Right cardiac atrium (tissue), 5 donors: ENCODE measurements at regions of chr1 and their contacts with region 1.

Region 1: DNA sequence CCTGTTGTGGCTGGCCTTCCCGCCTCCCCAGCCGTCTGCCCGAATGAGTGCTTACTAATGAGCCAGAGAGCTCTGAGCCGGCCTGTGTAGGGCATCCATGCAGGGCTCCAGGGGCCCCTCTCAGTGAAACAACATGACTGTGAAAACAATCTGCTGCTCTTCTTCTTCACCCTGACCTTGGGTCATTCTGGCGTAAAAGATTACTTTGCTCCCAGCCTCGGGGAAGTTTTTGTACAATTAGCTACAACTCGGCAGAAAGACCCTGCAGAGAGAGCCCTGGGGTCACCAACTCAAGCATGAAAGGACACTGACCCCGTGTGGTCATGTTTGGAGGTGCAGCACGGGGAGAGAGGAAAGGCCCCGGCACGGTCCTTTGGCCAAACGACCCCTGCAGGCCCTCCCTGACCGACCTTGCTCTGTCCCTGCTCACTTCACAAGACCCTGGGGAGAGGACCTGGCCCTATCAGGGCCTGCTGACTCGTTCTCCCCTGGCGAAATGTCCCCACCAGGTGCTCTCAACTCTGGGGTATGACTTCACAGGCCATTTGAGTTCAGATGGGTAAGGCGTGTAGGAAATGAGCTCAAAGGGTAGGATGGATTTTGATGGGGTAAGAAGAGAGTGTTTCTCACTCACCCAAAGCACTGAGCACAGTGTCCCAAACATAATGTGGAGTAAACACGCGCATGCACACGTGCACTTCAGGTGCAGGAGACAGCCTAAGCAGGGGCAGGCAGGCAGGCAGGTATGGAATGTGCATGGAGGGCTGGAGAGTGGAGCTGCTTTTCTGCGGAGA is 22.9 kb upstream of the FAM20B start:
- DNase-seq: peak; percentile 72 to 94 (median 87)
- ATAC-seq: peak; percentile 84 to 88
- H3K4me3 ChIP-seq: no peak overlapping the region
- H3K27ac ChIP-seq: no peak overlapping the region
- H3K4me1 ChIP-seq: no peaks in the 10 kb centered on the region
- H3K27me3 ChIP-seq: no peaks in the 10 kb centered on the region

Region 2: GRCh38 chr1:178532392-178532791 is 470.4 kb before region 1 on chr1:
- intact Hi-C with region 1: loop called in 1 of 4 experiments (anchors 5 kb)
- DNase-seq: peak; percentile 80 to 93 (median 93)
- ATAC-seq: peak; percentile 65 to 67
- H3K4me3 ChIP-seq: no peak overlapping the region
- H3K27ac ChIP-seq: no peak overlapping the region
- H3K4me1 ChIP-seq: peaks cover 9% of the 10 kb centered on the region
- H3K27me3 ChIP-seq: no peaks in the 10 kb centered on the region

Region 3: DNA sequence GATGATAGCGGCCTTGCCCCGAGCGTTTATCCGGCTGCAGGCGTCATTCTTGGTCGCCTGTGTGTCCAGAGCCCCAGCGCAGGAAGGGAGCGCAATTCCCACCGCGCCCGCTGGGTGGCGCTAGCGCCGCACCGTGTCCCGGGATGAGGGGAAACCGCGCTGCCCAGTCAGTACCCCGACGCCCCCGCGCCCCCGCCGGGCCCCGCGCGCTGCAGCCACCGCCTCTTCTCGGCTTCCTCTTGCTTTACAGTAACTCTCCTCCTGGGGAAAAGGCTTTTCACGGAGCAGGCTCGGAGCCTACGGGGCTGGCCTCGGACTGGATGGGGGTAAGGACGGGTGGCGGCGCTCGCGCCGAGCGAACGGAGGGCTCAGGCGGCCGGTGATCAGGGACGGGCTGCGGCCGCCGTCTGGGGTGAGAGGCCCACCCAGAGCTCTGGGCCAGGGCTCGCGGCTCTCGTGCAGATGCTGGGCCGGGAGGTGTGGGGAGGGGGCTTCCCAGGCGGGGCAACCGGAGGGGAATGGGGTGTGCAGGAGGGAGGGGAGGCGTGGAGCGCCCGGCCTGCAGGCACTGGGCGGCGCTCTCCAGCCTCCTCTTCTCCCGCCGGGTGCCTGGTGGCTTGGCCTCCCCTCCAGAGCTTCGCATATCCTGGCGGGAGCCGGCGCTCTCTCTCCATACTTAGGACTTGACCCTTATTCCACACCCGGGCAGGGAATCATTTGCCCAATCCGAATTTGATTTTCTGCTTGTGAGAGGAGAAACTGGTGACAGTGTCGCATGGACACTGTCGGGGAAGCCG is 460.0 kb before region 1 on chr1:
- intact Hi-C with region 1: loop called in 2 of 4 experiments (anchors 5 kb)
- DNase-seq: peak; percentile 85 to 96 (median 95)
- ATAC-seq: peak; percentile 93 to 94
- H3K4me3 ChIP-seq: peak overlapping the region; percentile 77
- H3K27ac ChIP-seq: peak overlapping the region; percentile 73
- H3K4me1 ChIP-seq: peaks cover 2% of the 10 kb centered on the region
- H3K27me3 ChIP-seq: no peaks in the 10 kb centered on the region

Region 4: DNA sequence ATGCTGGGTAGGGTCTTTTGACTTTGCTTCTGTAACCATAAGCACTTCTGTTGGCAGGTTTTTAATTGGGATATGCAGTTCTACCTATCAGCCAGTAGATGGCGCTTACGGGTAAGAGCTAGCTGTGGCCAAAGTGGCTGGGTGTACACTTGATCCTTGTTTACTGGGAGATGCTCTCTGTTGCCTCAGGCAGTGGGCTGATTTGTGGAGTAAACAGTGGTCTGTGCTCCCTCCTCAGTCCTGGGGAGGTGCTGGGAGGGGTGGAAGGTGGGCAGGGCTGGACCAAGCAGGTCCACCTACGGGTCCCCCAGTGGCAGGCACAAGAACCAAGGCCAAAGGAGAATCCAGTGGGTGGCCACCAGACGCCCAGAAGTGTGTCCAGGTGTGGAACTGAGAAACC is 234.3 kb before region 1 on chr1:
- intact Hi-C with region 1: loop called in 3 of 4 experiments (anchors 2 to 10 kb)
- DNase-seq: no peak
- ATAC-seq: peak in 1 of 2 donors; percentile 38
- H3K4me3 ChIP-seq: no peak overlapping the region
- H3K27ac ChIP-seq: no peak overlapping the region
- H3K4me1 ChIP-seq: no peaks in the 10 kb centered on the region
- H3K27me3 ChIP-seq: no peaks in the 10 kb centered on the region

Region 5: GRCh38 chr1:178774263-178774662 is 228.5 kb before region 1 on chr1:
- intact Hi-C with region 1: loop called in 3 of 4 experiments (anchors 2 to 10 kb)
- DNase-seq: no peak
- ATAC-seq: no peak
- H3K4me3 ChIP-seq: no peak overlapping the region
- H3K27ac ChIP-seq: no peak overlapping the region
- H3K4me1 ChIP-seq: no peaks in the 10 kb centered on the region
- H3K27me3 ChIP-seq: no peaks in the 10 kb centered on the region

Region 6: DNA sequence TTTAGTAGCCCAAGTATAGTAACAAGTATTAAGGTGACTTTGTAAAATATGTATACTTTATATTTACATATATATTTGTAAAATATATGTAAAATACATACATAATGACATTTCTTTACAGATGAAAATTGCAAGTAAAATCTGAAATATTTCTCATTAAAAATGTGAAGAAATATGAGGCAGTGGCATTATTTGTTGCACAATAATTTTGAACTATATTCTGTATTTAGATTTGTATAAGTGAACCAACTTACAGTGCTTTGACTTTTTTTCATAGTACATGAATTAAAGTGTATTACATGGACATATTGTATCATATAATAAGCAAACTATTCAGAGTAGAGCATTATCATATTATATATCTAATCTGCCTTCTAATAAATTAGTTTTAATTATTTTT is 192.2 kb before region 1 on chr1:
- intact Hi-C with region 1: loop called in 3 of 4 experiments (anchors 2 to 10 kb)
- DNase-seq: no peak
- ATAC-seq: no peak
- H3K4me3 ChIP-seq: no peak overlapping the region
- H3K27ac ChIP-seq: no peak overlapping the region
- H3K4me1 ChIP-seq: no peaks in the 10 kb centered on the region
- H3K27me3 ChIP-seq: no peaks in the 10 kb centered on the region

Region 7: GRCh38 chr1:178818416-178818815 is 184.3 kb before region 1 on chr1:
- intact Hi-C with region 1: loop called in 3 of 4 experiments (anchors 2 to 10 kb)
- DNase-seq: no peak
- ATAC-seq: no peak
- H3K4me3 ChIP-seq: no peak overlapping the region
- H3K27ac ChIP-seq: no peak overlapping the region
- H3K4me1 ChIP-seq: no peaks in the 10 kb centered on the region
- H3K27me3 ChIP-seq: no peaks in the 10 kb centered on the region